Activated B cell treated with CpG ODN at 0.5 μM for 24 hours (primary cell): ENCODE measurements at regions of chr2 and their contacts with region 1.

Region 1: GRCh38 chr2:135797497-135798274 is 39.3 kb downstream of the LCT start:
- DNase-seq: peak; percentile 59
- ATAC-seq: peak; percentile 81
- H3K4me3 Mint-ChIP-seq: no peak overlapping the region
- H3K27ac Mint-ChIP-seq: no peak overlapping the region
- H3K4me1 Mint-ChIP-seq: peaks cover 15% of the 10 kb centered on the region
- H3K27me3 Mint-ChIP-seq: no peaks in the 10 kb centered on the region
- CTCF ChIP-seq: peak; percentile 62

Region 2: GRCh38 chr2:134988994-134989605 is 808.6 kb before region 1 on chr2:
- CTCF ChIA-PET with region 1: interaction called, 20 read pairs
- POLR2A ChIA-PET with region 1: no interaction called
- intact Hi-C with region 1: loop called (anchors 1 kb)
- DNase-seq: no peak
- ATAC-seq: no peak
- H3K4me3 Mint-ChIP-seq: no peak overlapping the region
- H3K27ac Mint-ChIP-seq: no peak overlapping the region
- H3K4me1 Mint-ChIP-seq: peaks cover 4% of the 10 kb centered on the region
- H3K27me3 Mint-ChIP-seq: peaks cover 7% of the 10 kb centered on the region
- CTCF ChIP-seq: no peak